ENCODE measurements at regions of chr4 and their contacts with region 1.

Region 1: DNA sequence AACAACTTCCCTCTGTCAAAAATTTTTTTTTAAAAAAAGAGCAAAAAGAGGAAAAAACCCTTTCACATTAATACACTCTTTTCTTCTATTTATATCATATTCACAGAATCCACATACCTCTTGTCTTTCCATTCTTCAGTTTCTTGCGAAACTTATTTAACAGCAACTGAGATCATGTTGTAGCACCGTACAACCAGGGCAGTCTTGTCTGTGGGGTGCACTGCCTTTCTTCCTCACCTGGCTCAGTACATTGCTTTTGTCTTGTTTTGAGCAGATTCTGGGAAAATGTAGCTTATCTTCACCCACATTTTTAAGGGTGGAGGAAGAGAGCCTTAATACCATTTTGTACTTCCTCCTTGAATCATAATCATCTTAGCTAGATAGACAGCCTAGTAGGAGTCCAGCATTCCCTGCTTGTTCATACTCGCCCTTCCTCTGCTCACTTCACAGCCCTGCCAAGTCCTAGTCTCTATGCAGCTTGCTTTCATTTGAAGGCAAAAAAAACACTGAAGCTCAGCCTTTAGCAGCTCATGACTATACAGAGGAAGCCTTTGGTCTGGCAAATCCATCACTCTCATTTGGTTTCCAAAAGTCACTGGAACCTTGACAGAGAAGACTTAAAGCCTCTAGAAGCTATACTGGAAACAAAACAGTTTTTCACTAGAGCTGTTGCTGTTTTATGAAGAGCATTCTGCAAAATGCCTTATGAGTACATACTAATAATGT is 140.6 kb upstream of the BANK1 start:
- DNase-seq: peak in 1 of 2 experiments; percentile 12
- H3K4me3 ChIP-seq: no peak overlapping the region
- H3K27ac ChIP-seq: no peak overlapping the region
- H3K4me1 ChIP-seq: peaks cover 8% of the 10 kb centered on the region; the same call in 1 of the 2 replicates
- H3K27me3 ChIP-seq: no peaks in the 10 kb centered on the region
- CTCF ChIP-seq: no peak

Region 2: DNA sequence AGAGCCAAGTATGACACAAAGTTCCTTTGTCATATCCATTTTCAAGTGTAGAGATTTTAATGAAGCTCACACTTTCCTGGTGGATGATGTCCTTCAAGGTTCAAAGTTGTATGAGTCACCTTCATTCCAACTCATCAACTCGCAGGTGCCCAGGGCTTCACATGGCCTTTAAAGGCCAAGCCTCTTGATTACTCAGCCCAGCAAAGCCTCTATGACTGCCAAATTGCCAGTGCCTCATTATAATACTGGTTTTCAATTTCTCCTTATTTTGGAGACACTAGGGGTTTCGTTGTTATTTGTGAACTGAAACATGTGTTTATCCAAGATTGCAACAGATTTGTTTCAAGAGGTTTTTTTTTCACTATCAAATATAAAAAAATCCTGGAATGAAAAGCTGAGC is 256.7 kb before region 1 on chr4:
- CTCF ChIA-PET with region 1: no interaction called
- POLR2A ChIA-PET with region 1: interaction called, 12 read pairs
- intact Hi-C with region 1: no loop called
- DNase-seq: peak; percentile 38 to 72
- H3K4me3 ChIP-seq: no peak overlapping the region
- H3K27ac ChIP-seq: no peak overlapping the region
- H3K4me1 ChIP-seq: peaks cover 4% of the 10 kb centered on the region; the same call in 1 of the 2 replicates
- H3K27me3 ChIP-seq: no peaks in the 10 kb centered on the region
- CTCF ChIP-seq: no peak

Region 3: DNA sequence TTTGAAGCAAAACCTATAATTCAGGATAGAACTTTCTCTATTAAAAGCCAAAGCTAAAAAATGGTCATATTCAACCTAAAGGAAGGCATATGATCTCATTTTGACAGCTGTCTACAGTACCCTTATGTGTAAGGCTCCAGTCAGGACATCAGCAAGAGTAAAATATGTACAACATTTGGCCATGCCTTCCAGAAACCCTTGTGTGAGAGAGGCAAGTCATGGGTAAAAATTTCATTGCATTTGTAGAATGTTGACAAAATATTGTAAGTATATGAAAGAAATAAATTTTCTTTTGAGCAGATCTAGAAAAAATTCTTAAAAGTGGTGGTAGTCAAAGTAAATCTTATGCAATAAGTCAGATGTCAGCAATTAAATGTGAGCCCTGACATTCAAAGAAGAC is 563.1 kb after region 1 on chr4:
- CTCF ChIA-PET with region 1: no interaction called
- POLR2A ChIA-PET with region 1: no interaction called
- intact Hi-C with region 1: no loop called
- DNase-seq: no peak
- H3K4me3 ChIP-seq: no peak overlapping the region
- H3K27ac ChIP-seq: no peak overlapping the region
- H3K4me1 ChIP-seq: 0 out of 2 replicates have a peak, but pooled peaks cover 4% of the 10 kb centered on the region
- H3K27me3 ChIP-seq: no peaks in the 10 kb centered on the region
- CTCF ChIP-seq: no peak

Measured in PC-9 (cell line).